CD8-positive, alpha-beta T cell (primary cell): ENCODE measurements at regions of chr17 and their contacts with region 1.

Region 1: DNA sequence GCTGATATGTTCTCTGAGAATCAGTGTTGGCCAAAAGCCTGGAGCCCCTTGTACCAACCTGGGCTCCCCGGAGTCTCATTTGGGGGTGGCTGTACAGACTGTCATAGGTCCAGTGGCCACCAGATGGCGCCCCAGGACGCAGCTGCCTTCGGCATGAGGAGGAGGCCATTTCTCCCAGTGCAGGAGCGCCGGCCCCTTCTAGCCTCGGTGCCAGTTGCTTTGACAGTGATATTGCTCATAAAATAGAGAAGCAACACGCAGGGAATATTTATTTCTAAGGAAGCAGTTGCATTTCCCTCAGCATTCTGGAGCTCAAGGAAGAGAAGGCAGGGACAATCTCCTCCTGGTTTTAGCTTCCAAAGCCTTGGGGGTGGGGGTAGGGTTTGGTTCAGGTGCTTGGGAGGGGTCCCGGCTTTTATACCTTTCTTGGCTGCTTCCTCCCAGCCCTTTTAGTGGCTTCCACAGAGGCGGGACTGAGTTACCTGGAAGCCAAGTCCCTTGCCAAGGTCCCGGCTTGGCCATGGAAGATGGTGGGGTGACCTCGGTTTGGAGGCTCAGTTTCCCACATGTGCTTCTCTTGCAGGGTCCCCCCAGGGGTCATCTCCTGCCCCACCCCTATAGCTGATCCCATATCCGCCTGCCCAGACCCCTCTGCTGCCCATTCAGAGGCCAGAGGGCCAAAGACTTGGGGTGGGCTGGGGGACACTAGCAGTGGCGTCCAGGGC is 117.8 kb upstream of the CDC42EP4 start:
- DNase-seq: peak; percentile 76 to 95 (median 85)
- ATAC-seq: peak; percentile 92
- H3K4me3 ChIP-seq: no peak overlapping the region
- H3K4me3 Mint-ChIP-seq: no peak overlapping the region
- H3K27ac ChIP-seq: no peak overlapping the region
- H3K27ac Mint-ChIP-seq: no peak overlapping the region
- H3K4me1 ChIP-seq: peaks cover 3% of the 10 kb centered on the region
- H3K4me1 Mint-ChIP-seq: peaks cover 7% of the 10 kb centered on the region
- H3K27me3 ChIP-seq: no peaks in the 10 kb centered on the region
- H3K27me3 Mint-ChIP-seq: no peaks in the 10 kb centered on the region
- CTCF ChIP-seq: peak; percentile 96

Region 2: GRCh38 chr17:72725433-72726068 is 704.1 kb before region 1 on chr17:
- CTCF ChIA-PET with region 1: no interaction called
- POLR2A ChIA-PET with region 1: no interaction called
- intact Hi-C with region 1: loop called in 1 of 2 experiments (anchors 1 kb)
- DNase-seq: peak in 8 of 9 experiments; percentile 10 to 65 (median 48)
- ATAC-seq: peak; percentile 37
- H3K4me3 ChIP-seq: no peak overlapping the region
- H3K4me3 Mint-ChIP-seq: peak overlapping the region; percentile 7
- H3K27ac ChIP-seq: no peak overlapping the region
- H3K27ac Mint-ChIP-seq: peak overlapping the region; percentile 28
- H3K4me1 ChIP-seq: peaks cover 29% of the 10 kb centered on the region
- H3K4me1 Mint-ChIP-seq: peaks cover 32% of the 10 kb centered on the region
- H3K27me3 ChIP-seq: no peaks in the 10 kb centered on the region
- H3K27me3 Mint-ChIP-seq: no peaks in the 10 kb centered on the region
- CTCF ChIP-seq: peak; percentile 92

Region 3: DNA sequence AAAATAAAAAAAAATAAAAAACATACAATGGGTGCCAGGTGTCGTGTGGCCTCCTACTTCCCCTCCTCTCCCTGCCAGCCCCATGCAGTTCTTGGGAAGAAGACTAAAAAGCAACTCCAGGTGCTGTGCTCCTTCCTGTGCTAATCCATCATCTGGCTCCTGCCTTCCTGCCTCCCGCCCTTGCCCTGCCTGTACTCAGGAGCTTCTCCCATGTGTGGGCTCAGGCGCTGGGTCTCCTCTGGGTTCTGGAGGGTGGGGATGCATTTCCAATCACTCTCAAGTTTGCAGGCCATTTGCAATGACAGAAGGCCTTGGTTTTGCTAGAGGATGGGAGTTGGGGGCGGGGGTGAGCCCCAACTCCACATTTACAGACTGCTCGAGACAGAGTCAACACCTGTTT is 91.8 kb after region 1 on chr17:
- CTCF ChIA-PET with region 1: no interaction called
- POLR2A ChIA-PET with region 1: no interaction called
- intact Hi-C with region 1: no loop called
- DNase-seq: no peak
- ATAC-seq: no peak
- H3K4me3 ChIP-seq: no peak overlapping the region
- H3K4me3 Mint-ChIP-seq: no peak overlapping the region
- H3K27ac ChIP-seq: no peak overlapping the region
- H3K27ac Mint-ChIP-seq: no peak overlapping the region
- H3K4me1 ChIP-seq: no peaks in the 10 kb centered on the region
- H3K4me1 Mint-ChIP-seq: no peaks in the 10 kb centered on the region
- H3K27me3 ChIP-seq: no peaks in the 10 kb centered on the region
- H3K27me3 Mint-ChIP-seq: no peaks in the 10 kb centered on the region
- CTCF ChIP-seq: no peak

Region 4: DNA sequence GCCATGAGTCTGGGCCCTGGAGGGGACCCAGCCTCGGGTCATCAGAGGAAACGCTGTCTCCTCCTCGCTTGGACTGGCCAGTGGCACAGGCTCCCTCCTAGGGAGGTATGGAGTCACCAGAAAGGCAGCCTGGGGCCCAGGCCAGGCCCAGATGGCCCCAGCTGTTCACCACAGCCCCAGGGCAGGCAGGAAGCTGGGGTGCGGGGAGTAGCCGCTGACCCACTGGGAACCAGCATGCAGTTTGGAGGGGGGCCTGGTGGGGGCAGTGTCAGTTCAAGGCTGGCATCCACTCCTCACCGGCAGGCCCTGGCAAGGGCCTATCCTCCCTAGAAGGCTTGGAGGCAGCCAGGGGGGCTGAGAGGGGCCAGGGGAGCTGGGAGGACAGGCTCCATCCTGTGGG is 165.9 kb after region 1 on chr17:
- CTCF ChIA-PET with region 1: interaction called, 5 read pairs
- POLR2A ChIA-PET with region 1: no interaction called
- intact Hi-C with region 1: loop called in 1 of 2 experiments (anchors 2 kb)
- DNase-seq: peak in 6 of 9 experiments; percentile 18 to 70 (median 39)
- ATAC-seq: no peak
- H3K4me3 ChIP-seq: no peak overlapping the region
- H3K4me3 Mint-ChIP-seq: no peak overlapping the region
- H3K27ac ChIP-seq: peak overlapping the region in 1 of 2 experiments; percentile 8
- H3K27ac Mint-ChIP-seq: peak overlapping the region; percentile 41
- H3K4me1 ChIP-seq: peaks cover 65% of the 10 kb centered on the region
- H3K4me1 Mint-ChIP-seq: peaks cover 62% of the 10 kb centered on the region
- H3K27me3 ChIP-seq: peaks cover 0 to 4% of the 10 kb centered on the region in 2 experiments
- H3K27me3 Mint-ChIP-seq: no peaks in the 10 kb centered on the region
- CTCF ChIP-seq: peak; percentile 21

Region 5: GRCh38 chr17:73710095-73710592 is 280.5 kb after region 1 on chr17:
- CTCF ChIA-PET with region 1: interaction called, 144 read pairs
- POLR2A ChIA-PET with region 1: no interaction called
- intact Hi-C with region 1: loop called in 1 of 2 experiments (anchors 1 kb)
- DNase-seq: peak; percentile 37 to 80 (median 67)
- ATAC-seq: peak; percentile 78
- H3K4me3 ChIP-seq: no peak overlapping the region
- H3K4me3 Mint-ChIP-seq: no peak overlapping the region
- H3K27ac ChIP-seq: no peak overlapping the region
- H3K27ac Mint-ChIP-seq: no peak overlapping the region
- H3K4me1 ChIP-seq: peaks cover 6% of the 10 kb centered on the region
- H3K4me1 Mint-ChIP-seq: peaks cover 12% of the 10 kb centered on the region
- H3K27me3 ChIP-seq: no peaks in the 10 kb centered on the region
- H3K27me3 Mint-ChIP-seq: no peaks in the 10 kb centered on the region
- CTCF ChIP-seq: peak; percentile 82

Region 6: DNA sequence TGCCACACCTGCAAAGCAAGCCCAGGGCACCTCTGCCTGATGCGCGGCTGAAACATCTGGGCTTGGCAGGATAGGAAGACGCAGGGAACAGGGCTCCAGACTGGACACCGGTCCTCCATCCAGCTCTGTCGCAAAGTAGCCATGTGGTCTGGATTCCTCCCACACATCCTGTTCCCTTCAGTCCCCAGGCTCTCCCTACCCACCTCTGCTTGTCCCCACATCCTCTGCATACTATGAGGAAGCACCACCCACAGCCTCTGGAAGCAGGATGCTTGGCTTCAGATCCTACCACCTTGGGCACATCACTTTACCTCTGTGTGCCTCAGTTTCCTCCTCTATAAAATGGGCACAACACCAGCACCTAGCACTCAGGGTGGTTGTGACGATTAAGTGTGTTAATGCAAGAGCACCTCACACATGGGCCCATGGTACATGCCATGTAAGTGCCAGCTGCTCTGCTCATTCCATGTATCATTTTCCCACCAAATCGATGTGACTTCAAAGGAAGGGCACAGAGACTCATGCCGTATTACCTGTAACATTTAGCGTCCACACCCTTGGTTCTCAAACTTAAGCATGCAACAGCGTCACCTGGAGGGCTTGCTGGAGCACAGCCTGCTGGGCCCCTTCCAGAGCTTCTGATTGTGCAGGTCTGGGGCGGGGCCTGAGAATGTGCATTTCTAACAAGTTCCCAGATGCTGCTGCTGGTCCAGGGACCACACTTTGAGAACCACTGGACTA is 353.2 kb after region 1 on chr17:
- CTCF ChIA-PET with region 1: no interaction called
- POLR2A ChIA-PET with region 1: no interaction called
- intact Hi-C with region 1: loop called in 1 of 2 experiments (anchors 2 kb)
- DNase-seq: peak in 1 of 9 experiments; percentile 25
- ATAC-seq: no peak
- H3K4me3 ChIP-seq: no peak overlapping the region
- H3K4me3 Mint-ChIP-seq: no peak overlapping the region
- H3K27ac ChIP-seq: no peak overlapping the region
- H3K27ac Mint-ChIP-seq: no peak overlapping the region
- H3K4me1 ChIP-seq: no peaks in the 10 kb centered on the region
- H3K4me1 Mint-ChIP-seq: peaks cover 12% of the 10 kb centered on the region
- H3K27me3 ChIP-seq: no peaks in the 10 kb centered on the region
- H3K27me3 Mint-ChIP-seq: peaks cover 7% of the 10 kb centered on the region
- CTCF ChIP-seq: no peak

Region 7: DNA sequence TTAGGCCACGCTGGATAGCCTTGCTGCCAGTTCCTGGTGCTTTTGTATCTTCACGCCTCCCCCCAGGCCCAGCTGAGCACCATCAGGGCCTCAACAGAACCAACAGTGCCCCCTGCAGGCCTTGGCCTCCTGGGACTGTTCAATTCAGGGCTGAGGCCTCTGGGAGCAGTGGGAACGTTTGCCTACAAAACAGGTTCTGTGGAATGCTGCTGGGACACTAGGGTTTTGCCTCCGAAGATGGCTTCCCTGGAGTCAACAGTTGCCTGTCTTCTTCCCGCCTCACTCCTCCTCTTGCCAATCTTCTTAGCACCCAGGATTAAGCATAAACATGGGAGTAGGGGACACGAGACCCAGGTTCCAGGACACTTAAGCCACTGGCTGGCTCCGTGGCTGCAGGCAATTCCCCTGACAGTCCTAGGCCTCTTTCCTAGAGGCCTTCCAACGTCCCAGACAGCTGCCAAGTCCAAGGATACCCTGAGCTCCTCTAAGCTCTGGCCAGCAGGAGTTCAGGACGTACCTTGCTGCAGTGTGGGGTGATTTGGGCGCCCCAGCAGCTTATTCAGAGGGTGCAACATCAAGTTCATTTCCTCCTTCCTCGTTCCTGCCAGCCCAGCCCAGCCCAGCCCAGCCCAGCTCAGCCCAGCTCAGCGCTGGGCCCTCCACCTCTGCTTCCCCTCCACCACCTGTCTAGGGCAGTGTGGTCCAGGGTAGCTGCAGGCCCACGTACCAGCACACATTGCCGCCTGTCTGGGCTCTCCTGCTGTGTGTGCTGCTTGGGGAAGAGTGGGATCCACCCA is 527.3 kb after region 1 on chr17:
- CTCF ChIA-PET with region 1: interaction called, 11 read pairs
- POLR2A ChIA-PET with region 1: no interaction called
- intact Hi-C with region 1: loop called (anchors 1 kb)
- DNase-seq: peak; percentile 13 to 77 (median 53)
- ATAC-seq: peak; percentile 54
- H3K4me3 ChIP-seq: no peak overlapping the region
- H3K4me3 Mint-ChIP-seq: no peak overlapping the region
- H3K27ac ChIP-seq: no peak overlapping the region
- H3K27ac Mint-ChIP-seq: no peak overlapping the region
- H3K4me1 ChIP-seq: peaks cover 4% of the 10 kb centered on the region
- H3K4me1 Mint-ChIP-seq: peaks cover 3% of the 10 kb centered on the region
- H3K27me3 ChIP-seq: peaks cover 9 to 23% of the 10 kb centered on the region in 2 experiments
- H3K27me3 Mint-ChIP-seq: peaks cover 3% of the 10 kb centered on the region
- CTCF ChIP-seq: peak; percentile 35

Region 8: GRCh38 chr17:74176546-74177001 is 747.0 kb after region 1 on chr17:
- CTCF ChIA-PET with region 1: interaction called, 6 read pairs
- POLR2A ChIA-PET with region 1: no interaction called
- intact Hi-C with region 1: loop called in 1 of 2 experiments (anchors 1 kb)
- DNase-seq: peak in 6 of 9 experiments; percentile 12 to 58 (median 31)
- ATAC-seq: no peak
- H3K4me3 ChIP-seq: no peak overlapping the region
- H3K4me3 Mint-ChIP-seq: no peak overlapping the region
- H3K27ac ChIP-seq: no peak overlapping the region
- H3K27ac Mint-ChIP-seq: no peak overlapping the region
- H3K4me1 ChIP-seq: no peaks in the 10 kb centered on the region
- H3K4me1 Mint-ChIP-seq: no peaks in the 10 kb centered on the region
- H3K27me3 ChIP-seq: peaks cover 0 to 12% of the 10 kb centered on the region in 2 experiments
- H3K27me3 Mint-ChIP-seq: peaks cover 29% of the 10 kb centered on the region
- CTCF ChIP-seq: peak; percentile 38